Dendritic cell treated with granulocyte-macrophage colony-stimulating factor and Interleukin-4, amounts not matched to agents 40 ng/mL and 50 ng/mL, for 4 days (primary cell): ENCODE measurements at regions of chr10 and their contacts with region 1.

Region 1: GRCh38 chr10:102225646-102226541 is at the start of gene ELOVL3:
- H3K4me3 Mint-ChIP-seq: peak within 1 kb of the TSS; percentile 83
- H3K27ac Mint-ChIP-seq: peak within 1 kb of the TSS; percentile 57
- H3K4me1 Mint-ChIP-seq: peaks cover 41% of the 10 kb centered on the region
- H3K27me3 Mint-ChIP-seq: peaks cover 37% of the 10 kb centered on the region

Region 2: GRCh38 chr10:102167861-102168260 is 58.0 kb before region 1 on chr10:
- intact Hi-C with region 1: loop called (anchors 5 kb)
- H3K4me3 Mint-ChIP-seq: no peak overlapping the region
- H3K27ac Mint-ChIP-seq: no peak overlapping the region
- H3K4me1 Mint-ChIP-seq: peaks cover 5% of the 10 kb centered on the region
- H3K27me3 Mint-ChIP-seq: peaks cover 3% of the 10 kb centered on the region

Region 3: GRCh38 chr10:102185811-102186527 is 39.9 kb before region 1 on chr10:
- intact Hi-C with region 1: no loop called
- H3K4me3 Mint-ChIP-seq: no peak overlapping the region
- H3K27ac Mint-ChIP-seq: no peak overlapping the region
- H3K4me1 Mint-ChIP-seq: peaks cover 15% of the 10 kb centered on the region
- H3K27me3 Mint-ChIP-seq: no peaks in the 10 kb centered on the region

Region 4: GRCh38 chr10:102208311-102209035 is 17.4 kb before region 1 on chr10:
- intact Hi-C with region 1: no loop called
- H3K4me3 Mint-ChIP-seq: no peak overlapping the region
- H3K27ac Mint-ChIP-seq: no peak overlapping the region
- H3K4me1 Mint-ChIP-seq: peaks cover 3% of the 10 kb centered on the region
- H3K27me3 Mint-ChIP-seq: no peaks in the 10 kb centered on the region

Region 5: GRCh38 chr10:102245101-102245931 is 19.4 kb after region 1 on chr10 and contains the start of gene GBF1:
- intact Hi-C with region 1: loop called (anchors 2 kb)
- H3K4me3 Mint-ChIP-seq: peak within 1 kb of the TSS; percentile 92
- H3K27ac Mint-ChIP-seq: peak within 1 kb of the TSS; percentile 89
- H3K4me1 Mint-ChIP-seq: peaks cover 46% of the 10 kb centered on the region
- H3K27me3 Mint-ChIP-seq: peaks cover 27% of the 10 kb centered on the region

Region 6: GRCh38 chr10:102352066-102352715 is 126.3 kb after region 1 on chr10:
- intact Hi-C with region 1: loop called (anchors 1 kb)
- H3K4me3 Mint-ChIP-seq: no peak overlapping the region
- H3K27ac Mint-ChIP-seq: no peak overlapping the region
- H3K4me1 Mint-ChIP-seq: no peaks in the 10 kb centered on the region
- H3K27me3 Mint-ChIP-seq: no peaks in the 10 kb centered on the region

Region 7: DNA sequence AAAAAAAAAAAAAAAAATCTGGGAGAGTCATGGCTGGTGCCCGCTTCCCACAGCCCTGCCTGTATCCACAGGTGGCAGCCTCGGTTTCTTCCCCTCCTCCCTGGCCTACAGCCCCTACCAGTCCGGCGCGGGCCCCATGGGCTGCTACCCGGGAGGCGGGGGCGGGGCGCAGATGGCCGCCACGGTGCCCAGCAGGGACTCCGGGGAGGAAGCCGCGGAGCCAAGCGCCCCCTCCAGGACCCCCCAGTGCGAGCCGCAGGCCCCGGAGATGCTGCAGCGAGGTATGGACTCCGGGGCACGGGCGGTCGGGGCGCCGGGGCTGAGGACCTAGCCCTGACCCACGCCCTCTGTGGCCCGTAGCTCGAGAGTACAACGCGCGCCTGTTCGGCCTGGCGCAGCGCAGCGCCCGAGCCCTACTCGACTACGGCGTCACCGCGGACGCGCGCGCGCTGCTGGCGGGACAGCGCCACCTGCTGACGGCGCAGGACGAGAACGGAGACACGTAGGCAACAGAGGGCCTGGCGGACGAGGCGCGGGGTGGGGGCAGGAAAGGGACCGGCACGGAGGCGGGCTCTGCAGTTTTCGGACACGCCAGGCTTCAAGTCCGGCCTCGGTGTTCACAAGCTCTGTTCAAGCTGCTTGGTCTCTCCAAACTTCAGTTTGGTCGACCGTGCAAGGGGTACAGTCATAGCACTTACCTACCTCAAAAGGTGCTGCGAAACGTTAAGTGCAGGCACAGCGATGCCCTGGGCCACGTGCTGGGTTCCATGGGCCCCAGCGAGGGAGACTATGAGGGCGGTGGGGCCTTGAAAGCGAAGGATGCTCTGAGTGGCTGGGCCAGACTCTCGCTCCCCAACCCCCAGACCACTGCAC is 173.6 kb after region 1 on chr10:
- intact Hi-C with region 1: loop called (anchors 5 kb)
- H3K4me3 Mint-ChIP-seq: peak overlapping the region; percentile 66
- H3K27ac Mint-ChIP-seq: peak overlapping the region; percentile 79
- H3K4me1 Mint-ChIP-seq: peaks cover 45% of the 10 kb centered on the region
- H3K27me3 Mint-ChIP-seq: peaks cover 3% of the 10 kb centered on the region

Region 8: DNA sequence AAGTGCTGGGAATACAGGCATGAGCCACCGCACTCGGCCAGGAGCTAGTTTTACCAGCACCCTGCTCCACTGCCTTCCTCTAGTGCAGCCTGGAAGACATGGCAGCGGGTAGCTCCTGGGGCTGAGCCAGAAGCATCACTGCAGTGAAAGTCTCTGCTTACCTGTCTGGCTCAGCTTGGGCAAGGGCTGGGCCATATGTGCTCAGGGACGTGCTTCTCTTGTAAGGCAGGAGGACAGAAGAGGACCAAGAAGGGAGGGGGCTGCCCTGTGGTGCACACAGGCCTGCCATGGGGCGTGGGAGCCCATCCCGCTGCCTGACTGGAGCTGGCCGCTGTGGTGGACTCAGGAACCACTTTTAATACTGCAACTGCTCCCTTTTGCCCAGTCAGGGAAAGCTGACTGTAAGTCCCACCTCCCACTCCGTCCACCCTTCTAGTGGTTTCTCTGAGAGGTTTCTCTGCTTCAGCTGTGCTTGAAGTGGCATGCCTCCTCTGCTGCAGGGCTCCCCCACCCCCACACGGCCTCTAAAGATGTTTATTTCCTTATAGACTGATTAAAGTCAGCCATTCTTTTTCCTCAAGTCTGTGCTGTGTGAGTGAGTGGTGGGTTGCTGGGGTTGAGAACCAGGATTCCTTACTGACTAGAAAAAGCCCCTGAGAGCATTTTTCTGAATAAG is 250.7 kb after region 1 on chr10:
- intact Hi-C with region 1: loop called (anchors 5 kb)
- H3K4me3 Mint-ChIP-seq: no peak overlapping the region
- H3K27ac Mint-ChIP-seq: no peak overlapping the region
- H3K4me1 Mint-ChIP-seq: peaks cover 10% of the 10 kb centered on the region
- H3K27me3 Mint-ChIP-seq: no peaks in the 10 kb centered on the region